ENCODE measurements at regions of chr15 and their contacts with region 1.

Region 1: GRCh38 chr15:82530606-82531379 is 9.5 kb downstream of the RPS17 start:
- DNase-seq: peak; percentile 56
- ATAC-seq: peak; percentile 98
- H3K4me3 ChIP-seq: no peak overlapping the region
- H3K27ac ChIP-seq: no peak overlapping the region
- H3K4me1 ChIP-seq: no peaks in the 10 kb centered on the region; the same call in 1 of the 2 replicates
- H3K27me3 ChIP-seq: no peaks in the 10 kb centered on the region
- CTCF ChIP-seq: peak; percentile 52
- POLR2A ChIP-seq: no peak
- RAD21 ChIP-seq: 0 out of 2 replicates have a peak, but pooled peaks have one; percentile 31

Region 2: GRCh38 chr15:81443040-81443820 is 1087.6 kb before region 1 on chr15:
- CTCF ChIA-PET with region 1: no interaction called
- POLR2A ChIA-PET with region 1: no interaction called
- dilution Hi-C with region 1: no loop called
- in situ Hi-C with region 1: no loop called
- intact Hi-C with region 1: no loop called
- DNase-seq: no peak
- ATAC-seq: no peak
- H3K4me3 ChIP-seq: no peak overlapping the region
- H3K27ac ChIP-seq: no peak overlapping the region
- H3K4me1 ChIP-seq: no peaks in the 10 kb centered on the region
- H3K27me3 ChIP-seq: peaks cover 2% of the 10 kb centered on the region; the same call in 1 of the 2 replicates
- CTCF ChIP-seq: no peak
- POLR2A ChIP-seq: no peak
- RAD21 ChIP-seq: no peak

Region 3: GRCh38 chr15:82371656-82372055 is 159.1 kb before region 1 on chr15:
- CTCF ChIA-PET with region 1: no interaction called
- POLR2A ChIA-PET with region 1: no interaction called
- dilution Hi-C with region 1: no loop called
- in situ Hi-C with region 1: loop called (anchors 10 kb)
- intact Hi-C with region 1: no loop called
- DNase-seq: no peak
- ATAC-seq: no peak
- H3K4me3 ChIP-seq: no peak overlapping the region
- H3K27ac ChIP-seq: no peak overlapping the region
- H3K4me1 ChIP-seq: no peaks in the 10 kb centered on the region
- H3K27me3 ChIP-seq: no peaks in the 10 kb centered on the region
- CTCF ChIP-seq: no peak
- POLR2A ChIP-seq: no peak
- RAD21 ChIP-seq: no peak

Region 4: GRCh38 chr15:82832601-82833361 is 302.0 kb after region 1 on chr15:
- CTCF ChIA-PET with region 1: no interaction called
- POLR2A ChIA-PET with region 1: no interaction called
- dilution Hi-C with region 1: no loop called
- in situ Hi-C with region 1: loop called (anchors 10 kb)
- intact Hi-C with region 1: no loop called
- DNase-seq: peak; percentile 93
- ATAC-seq: peak; percentile 93
- H3K4me3 ChIP-seq: no peak overlapping the region
- H3K27ac ChIP-seq: peak overlapping the region; percentile 85
- H3K4me1 ChIP-seq: peaks cover 10% of the 10 kb centered on the region
- H3K27me3 ChIP-seq: no peaks in the 10 kb centered on the region
- CTCF ChIP-seq: no peak
- POLR2A ChIP-seq: no peak
- RAD21 ChIP-seq: no peak

Region 5: DNA sequence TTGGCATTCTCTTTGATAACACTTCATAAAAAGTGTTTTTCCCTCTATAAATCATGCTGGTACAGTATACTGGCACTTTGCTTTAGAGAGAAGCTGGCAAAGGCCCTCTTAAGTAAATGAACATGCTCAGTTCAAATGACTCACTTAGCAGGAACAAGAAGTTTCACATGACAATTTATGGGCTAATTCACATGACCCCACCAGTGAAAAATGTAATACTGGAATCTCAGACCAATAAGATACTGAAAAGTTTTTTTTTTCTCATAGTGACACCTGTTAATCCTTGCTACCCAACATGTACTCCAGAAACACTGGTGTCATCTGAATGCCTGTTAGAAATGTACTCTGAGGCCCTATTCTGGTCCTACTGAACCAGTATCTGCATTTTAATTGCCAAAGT is 522.4 kb after region 1 on chr15:
- CTCF ChIA-PET with region 1: no interaction called
- POLR2A ChIA-PET with region 1: no interaction called
- dilution Hi-C with region 1: no loop called
- in situ Hi-C with region 1: no loop called
- intact Hi-C with region 1: no loop called
- DNase-seq: peak; percentile 86
- ATAC-seq: peak; percentile 60
- H3K4me3 ChIP-seq: no peak overlapping the region
- H3K27ac ChIP-seq: no peak overlapping the region
- H3K4me1 ChIP-seq: peaks cover 2% of the 10 kb centered on the region; the same call in 1 of the 2 replicates
- H3K27me3 ChIP-seq: no peaks in the 10 kb centered on the region
- CTCF ChIP-seq: no peak
- POLR2A ChIP-seq: no peak
- RAD21 ChIP-seq: no peak

Measured in IMR-90 (cell line).